A673 (cell line): ENCODE measurements at regions of chr3 and their contacts with region 1.

Region 1: DNA sequence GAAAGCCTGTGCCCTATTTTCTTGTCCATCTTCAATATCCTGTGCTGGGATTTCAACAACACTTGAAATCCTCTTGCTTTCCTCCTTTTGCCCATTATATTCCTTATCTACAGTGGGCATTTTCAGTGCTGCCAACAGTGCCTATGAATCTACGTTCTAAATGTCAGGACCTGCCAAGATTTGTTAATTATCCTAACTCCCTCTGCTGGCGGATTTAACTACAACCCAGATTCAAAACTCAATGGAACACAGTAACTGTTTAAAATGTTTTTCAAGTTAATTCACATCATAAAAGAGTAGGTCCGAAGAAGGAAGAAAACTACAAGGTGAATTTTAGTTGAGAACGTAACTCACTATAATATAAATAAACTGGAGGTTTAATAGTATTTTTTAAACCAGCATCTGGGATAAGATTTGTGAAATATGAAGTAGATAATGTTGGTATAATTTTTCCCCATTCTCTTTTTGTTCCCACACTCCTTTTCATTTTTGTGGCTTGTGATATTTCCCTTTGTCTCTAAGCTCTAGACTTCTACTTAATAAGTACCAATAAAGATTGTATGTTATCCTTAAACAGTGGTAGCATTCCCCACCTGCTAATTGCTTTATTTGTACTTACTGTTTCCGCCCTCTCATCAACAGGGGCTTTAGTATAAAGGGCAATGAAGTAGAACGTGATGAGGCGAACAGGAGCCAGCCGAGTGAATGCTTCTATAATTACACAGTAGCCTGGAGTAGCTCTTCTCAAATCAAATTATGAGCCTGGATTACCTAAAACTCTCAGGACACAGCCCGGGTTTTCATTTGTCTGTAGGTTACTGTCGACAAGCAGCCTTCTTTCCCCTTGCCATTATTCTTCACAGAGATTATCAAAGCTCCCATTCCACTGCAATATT is 302.5 kb upstream of the ATP11B start:
- DNase-seq: peak; percentile 69
- H3K4me3 ChIP-seq: no peak overlapping the region
- H3K27ac ChIP-seq: no peak overlapping the region
- H3K4me1 ChIP-seq: peaks cover 20% of the 10 kb centered on the region
- H3K27me3 ChIP-seq: no peaks in the 10 kb centered on the region
- CTCF ChIP-seq: peak; percentile 73

Region 2: GRCh38 chr3:182544542-182544941 is 53.7 kb after region 1 on chr3:
- CTCF ChIA-PET with region 1: no interaction called
- POLR2A ChIA-PET with region 1: no interaction called
- intact Hi-C with region 1: no loop called
- DNase-seq: no peak
- H3K4me3 ChIP-seq: no peak overlapping the region
- H3K27ac ChIP-seq: no peak overlapping the region
- H3K4me1 ChIP-seq: no peaks in the 10 kb centered on the region
- H3K27me3 ChIP-seq: peaks cover 3% of the 10 kb centered on the region
- CTCF ChIP-seq: no peak

Region 3: DNA sequence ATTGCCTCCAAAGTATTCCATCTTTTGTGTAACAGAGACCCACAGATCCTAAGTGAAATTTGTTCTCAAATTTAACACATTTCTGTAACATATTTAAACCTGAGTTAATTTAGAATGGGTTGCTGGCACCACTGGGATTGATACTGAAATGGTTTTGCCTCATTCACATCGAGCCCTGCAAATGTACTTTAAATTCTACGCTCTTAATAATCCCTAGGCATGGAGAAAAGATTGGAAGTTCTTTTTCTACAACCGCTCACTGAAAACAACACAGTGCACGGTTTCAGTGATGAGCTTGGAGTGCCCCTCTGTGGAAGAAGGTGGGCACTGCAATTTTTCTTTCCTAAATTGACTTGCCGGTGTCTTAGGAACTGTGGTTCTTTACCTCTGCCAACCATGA is 192.6 kb after region 1 on chr3:
- CTCF ChIA-PET with region 1: interaction called, 5 read pairs
- POLR2A ChIA-PET with region 1: no interaction called
- intact Hi-C with region 1: loop called (anchors 5 kb)
- DNase-seq: peak; percentile 84
- H3K4me3 ChIP-seq: peak overlapping the region; percentile 61
- H3K27ac ChIP-seq: no peak overlapping the region
- H3K4me1 ChIP-seq: peaks cover 12% of the 10 kb centered on the region
- H3K27me3 ChIP-seq: peaks cover 28% of the 10 kb centered on the region
- CTCF ChIP-seq: peak; percentile 96

Region 4: GRCh38 chr3:182725372-182726251 is 234.8 kb after region 1 on chr3:
- CTCF ChIA-PET with region 1: no interaction called
- POLR2A ChIA-PET with region 1: no interaction called
- intact Hi-C with region 1: no loop called
- DNase-seq: peak; percentile 21
- H3K4me3 ChIP-seq: no peak overlapping the region
- H3K27ac ChIP-seq: no peak overlapping the region
- H3K4me1 ChIP-seq: no peaks in the 10 kb centered on the region
- H3K27me3 ChIP-seq: no peaks in the 10 kb centered on the region
- CTCF ChIP-seq: no peak